CD8-positive, alpha-beta T cell (primary cell): ENCODE measurements at regions of chr19 and their contacts with region 1.

Region 1: DNA sequence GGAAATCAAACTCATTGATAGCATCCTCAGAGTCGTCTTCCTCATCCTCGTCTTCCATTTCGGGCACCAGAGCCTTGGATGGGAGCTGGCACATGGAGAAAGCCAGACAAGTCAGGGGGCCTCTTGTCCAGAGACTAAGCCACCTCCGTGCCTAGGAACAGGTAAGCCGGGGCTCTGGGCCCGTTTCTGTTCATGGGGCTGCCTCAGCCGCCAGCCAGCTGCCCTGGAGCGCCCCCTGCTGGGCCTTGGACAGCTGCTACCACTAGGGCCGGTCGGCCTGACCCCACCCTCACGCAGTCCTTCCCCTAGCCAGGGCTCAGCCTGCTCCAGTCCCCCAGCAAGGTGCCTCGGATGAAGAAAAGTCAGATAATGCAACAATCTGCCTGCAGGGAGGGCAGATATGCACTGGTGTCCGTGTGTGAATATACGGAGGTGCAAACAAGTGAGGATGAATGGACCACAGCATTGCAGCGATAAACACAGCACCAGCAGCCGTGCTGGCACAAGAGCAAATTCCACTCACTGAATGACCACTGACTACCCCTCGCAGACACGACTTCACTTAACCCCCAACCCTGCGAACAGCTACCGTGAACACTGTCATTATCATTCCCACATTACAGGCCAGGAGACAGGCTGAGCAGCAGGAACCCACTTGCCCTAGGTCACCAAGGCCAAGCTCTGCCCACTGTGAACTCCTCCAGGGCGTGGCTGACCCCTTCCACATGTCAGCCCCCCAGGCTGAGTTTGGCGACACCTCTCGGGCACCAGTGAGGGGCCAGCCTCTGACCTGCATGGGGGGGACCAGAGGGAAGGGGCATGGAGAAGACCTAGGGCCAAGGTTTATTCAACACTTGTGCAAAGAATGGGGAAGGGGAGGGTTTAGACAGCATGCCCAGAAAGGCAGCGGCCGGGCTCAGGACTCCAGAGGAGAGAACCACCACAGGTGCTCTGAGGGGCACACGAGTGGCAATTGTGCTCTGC is 12.1 kb upstream of the PRKD2 start:
- DNase-seq: peak; percentile 64 to 93 (median 84)
- ATAC-seq: peak; percentile 90
- H3K4me3 ChIP-seq: no peak overlapping the region
- H3K4me3 Mint-ChIP-seq: no peak overlapping the region
- H3K27ac ChIP-seq: no peak overlapping the region
- H3K27ac Mint-ChIP-seq: peak overlapping the region; percentile 32
- H3K4me1 ChIP-seq: peaks cover 13% of the 10 kb centered on the region
- H3K4me1 Mint-ChIP-seq: peaks cover 10% of the 10 kb centered on the region
- H3K27me3 ChIP-seq: no peaks in the 10 kb centered on the region
- H3K27me3 Mint-ChIP-seq: no peaks in the 10 kb centered on the region
- CTCF ChIP-seq: peak; percentile 90

Region 2: DNA sequence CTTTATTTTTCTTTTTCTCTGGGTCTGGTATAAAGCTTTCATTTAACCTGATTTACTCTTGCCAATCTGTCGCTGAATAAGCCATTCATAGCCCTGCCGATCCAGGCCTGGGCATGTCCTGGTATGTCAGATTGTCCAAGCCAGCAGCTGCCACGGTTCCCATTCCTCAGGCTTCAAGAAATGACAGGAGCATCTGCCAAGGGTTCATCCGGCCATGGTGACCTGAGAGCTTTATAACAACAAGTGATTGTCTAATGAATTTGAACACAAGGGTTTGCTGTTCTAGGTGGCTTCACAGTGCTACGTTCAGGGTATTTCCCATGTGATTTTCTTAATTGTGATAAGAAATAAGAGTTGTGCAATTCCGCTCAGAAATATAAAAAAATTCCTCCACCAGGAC is 277.6 kb before region 1 on chr19:
- CTCF ChIA-PET with region 1: no interaction called
- POLR2A ChIA-PET with region 1: no interaction called
- intact Hi-C with region 1: no loop called
- DNase-seq: no peak
- ATAC-seq: no peak
- H3K4me3 ChIP-seq: no peak overlapping the region
- H3K4me3 Mint-ChIP-seq: no peak overlapping the region
- H3K27ac ChIP-seq: no peak overlapping the region
- H3K27ac Mint-ChIP-seq: no peak overlapping the region
- H3K4me1 ChIP-seq: no peaks in the 10 kb centered on the region
- H3K4me1 Mint-ChIP-seq: no peaks in the 10 kb centered on the region
- H3K27me3 ChIP-seq: peaks cover 0 to 6% of the 10 kb centered on the region in 2 experiments
- H3K27me3 Mint-ChIP-seq: peaks cover 19% of the 10 kb centered on the region
- CTCF ChIP-seq: no peak

Region 3: DNA sequence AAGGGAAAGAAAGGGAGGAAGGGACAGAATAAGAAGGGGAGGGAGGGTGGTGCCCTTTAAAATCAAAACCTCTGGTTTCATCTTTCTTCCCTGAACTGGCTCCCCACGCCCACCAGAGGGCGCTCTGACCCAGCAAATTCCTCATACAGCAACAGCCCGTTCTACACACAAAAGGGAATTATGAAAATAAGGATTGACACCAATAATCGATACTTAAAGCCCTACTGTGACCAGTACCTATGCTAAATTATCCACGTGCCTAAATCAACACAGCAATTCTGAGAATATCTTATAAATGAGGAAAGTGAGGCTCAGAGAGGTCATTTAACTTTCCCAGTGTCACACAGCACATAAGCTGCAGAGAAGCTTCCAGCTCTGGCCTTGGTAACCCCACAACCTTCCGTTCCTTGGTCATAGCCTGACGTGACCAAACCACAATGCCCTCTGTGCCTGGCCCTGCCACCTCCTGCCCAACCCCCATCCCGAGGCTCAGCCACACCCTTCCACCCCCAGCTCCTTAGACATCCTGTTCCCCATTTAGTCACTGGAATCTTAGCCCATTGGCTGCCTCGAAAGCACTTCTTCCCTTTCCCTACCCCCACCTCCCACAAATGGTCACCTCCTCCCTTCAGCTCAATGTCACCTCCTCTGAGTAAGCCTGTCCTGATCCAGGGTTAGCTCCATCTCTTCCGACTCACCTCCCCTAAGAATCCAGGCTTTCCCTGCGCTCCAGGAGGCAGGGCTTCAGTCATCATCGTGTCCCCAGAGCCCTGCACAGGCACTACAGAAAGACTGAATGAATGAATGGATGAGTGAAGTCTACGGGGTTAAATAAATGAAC is 199.1 kb before region 1 on chr19:
- CTCF ChIA-PET with region 1: interaction called, 4 read pairs
- POLR2A ChIA-PET with region 1: no interaction called
- intact Hi-C with region 1: loop called in 1 of 2 experiments (anchors 1 kb)
- DNase-seq: peak; percentile 57 to 88 (median 74)
- ATAC-seq: peak; percentile 75
- H3K4me3 ChIP-seq: no peak overlapping the region
- H3K4me3 Mint-ChIP-seq: no peak overlapping the region
- H3K27ac ChIP-seq: no peak overlapping the region
- H3K27ac Mint-ChIP-seq: no peak overlapping the region
- H3K4me1 ChIP-seq: peaks cover 4% of the 10 kb centered on the region
- H3K4me1 Mint-ChIP-seq: peaks cover 13% of the 10 kb centered on the region
- H3K27me3 ChIP-seq: peaks cover 0 to 2% of the 10 kb centered on the region in 2 experiments
- H3K27me3 Mint-ChIP-seq: no peaks in the 10 kb centered on the region
- CTCF ChIP-seq: peak; percentile 99

Region 4: GRCh38 chr19:46564701-46565100 is 164.3 kb before region 1 on chr19:
- CTCF ChIA-PET with region 1: no interaction called
- POLR2A ChIA-PET with region 1: no interaction called
- intact Hi-C with region 1: no loop called
- DNase-seq: no peak
- ATAC-seq: no peak
- H3K4me3 ChIP-seq: no peak overlapping the region
- H3K4me3 Mint-ChIP-seq: no peak overlapping the region
- H3K27ac ChIP-seq: no peak overlapping the region
- H3K27ac Mint-ChIP-seq: no peak overlapping the region
- H3K4me1 ChIP-seq: no peaks in the 10 kb centered on the region
- H3K4me1 Mint-ChIP-seq: peaks cover 2% of the 10 kb centered on the region
- H3K27me3 ChIP-seq: no peaks in the 10 kb centered on the region
- H3K27me3 Mint-ChIP-seq: peaks cover 7% of the 10 kb centered on the region
- CTCF ChIP-seq: no peak

Region 5: DNA sequence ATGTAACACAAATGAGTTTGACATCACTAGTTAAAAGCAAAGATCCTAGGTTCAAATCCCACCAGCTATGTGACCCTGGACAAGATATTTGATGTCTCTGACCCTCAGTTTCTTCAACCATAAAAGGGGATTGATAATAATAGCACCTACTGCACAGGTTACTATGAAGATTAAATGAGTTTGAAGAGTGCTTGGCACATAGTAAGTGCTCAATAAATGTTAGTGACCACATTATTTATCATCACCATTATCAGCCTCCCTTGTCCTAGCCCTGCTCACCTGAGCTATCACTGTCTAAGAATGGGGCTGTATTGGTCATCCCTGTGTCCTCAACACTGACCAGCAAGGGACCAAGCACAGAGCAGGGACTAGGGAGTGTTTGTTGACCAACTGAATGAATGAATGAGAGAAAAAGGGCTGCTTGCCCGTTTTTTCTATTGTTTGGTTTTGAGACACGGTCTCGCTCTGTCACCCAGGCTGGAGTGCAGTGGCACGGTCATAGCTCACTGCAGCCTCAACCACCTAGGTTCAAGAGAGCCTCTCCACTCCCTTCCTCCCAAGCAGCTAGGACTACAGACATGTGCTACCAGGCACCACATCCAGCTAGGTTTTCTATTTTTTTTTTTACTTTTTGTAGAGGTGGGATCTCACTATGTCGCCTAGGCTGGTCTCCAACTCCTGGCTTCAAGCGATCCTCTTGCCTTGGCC is 41.4 kb before region 1 on chr19:
- CTCF ChIA-PET with region 1: interaction called, 11 read pairs
- POLR2A ChIA-PET with region 1: no interaction called
- intact Hi-C with region 1: no loop called
- DNase-seq: no peak
- ATAC-seq: no peak
- H3K4me3 ChIP-seq: no peak overlapping the region
- H3K4me3 Mint-ChIP-seq: no peak overlapping the region
- H3K27ac ChIP-seq: no peak overlapping the region
- H3K27ac Mint-ChIP-seq: no peak overlapping the region
- H3K4me1 ChIP-seq: no peaks in the 10 kb centered on the region
- H3K4me1 Mint-ChIP-seq: peaks cover 4% of the 10 kb centered on the region
- H3K27me3 ChIP-seq: no peaks in the 10 kb centered on the region
- H3K27me3 Mint-ChIP-seq: no peaks in the 10 kb centered on the region
- CTCF ChIP-seq: no peak

Region 6: GRCh38 chr19:46699488-46699887 is 29.5 kb before region 1 on chr19:
- CTCF ChIA-PET with region 1: interaction called, 269 read pairs
- POLR2A ChIA-PET with region 1: interaction called, 7 read pairs
- intact Hi-C with region 1: loop called (anchors 1 kb)
- DNase-seq: no peak
- ATAC-seq: no peak
- H3K4me3 ChIP-seq: no peak overlapping the region
- H3K4me3 Mint-ChIP-seq: no peak overlapping the region
- H3K27ac ChIP-seq: no peak overlapping the region
- H3K27ac Mint-ChIP-seq: no peak overlapping the region
- H3K4me1 ChIP-seq: peaks cover 4% of the 10 kb centered on the region
- H3K4me1 Mint-ChIP-seq: peaks cover 7% of the 10 kb centered on the region
- H3K27me3 ChIP-seq: no peaks in the 10 kb centered on the region
- H3K27me3 Mint-ChIP-seq: no peaks in the 10 kb centered on the region
- CTCF ChIP-seq: no peak

Region 7: GRCh38 chr19:46717034-46717723 is 11.8 kb before region 1 on chr19 and contains the start of gene PRKD2:
- CTCF ChIA-PET with region 1: interaction called, 79 read pairs
- POLR2A ChIA-PET with region 1: interaction called, 28 read pairs
- intact Hi-C with region 1: loop called in 1 of 2 experiments (anchors 1 kb)
- DNase-seq: peak; percentile 60 to 91 (median 86)
- ATAC-seq: peak; percentile 51
- H3K4me3 ChIP-seq: peak within 1 kb of the TSS; percentile 71 to 73
- H3K4me3 Mint-ChIP-seq: peak within 1 kb of the TSS; percentile 92
- H3K27ac ChIP-seq: peak within 1 kb of the TSS; percentile 77 to 94
- H3K27ac Mint-ChIP-seq: peak within 1 kb of the TSS; percentile 99
- H3K4me1 ChIP-seq: peaks cover 37% of the 10 kb centered on the region
- H3K4me1 Mint-ChIP-seq: peaks cover 45% of the 10 kb centered on the region
- H3K27me3 ChIP-seq: no peaks in the 10 kb centered on the region
- H3K27me3 Mint-ChIP-seq: no peaks in the 10 kb centered on the region
- CTCF ChIP-seq: no peak
- total RNA-seq, gene PRKD2: 81.1 to 89.7 TPM

Region 8: DNA sequence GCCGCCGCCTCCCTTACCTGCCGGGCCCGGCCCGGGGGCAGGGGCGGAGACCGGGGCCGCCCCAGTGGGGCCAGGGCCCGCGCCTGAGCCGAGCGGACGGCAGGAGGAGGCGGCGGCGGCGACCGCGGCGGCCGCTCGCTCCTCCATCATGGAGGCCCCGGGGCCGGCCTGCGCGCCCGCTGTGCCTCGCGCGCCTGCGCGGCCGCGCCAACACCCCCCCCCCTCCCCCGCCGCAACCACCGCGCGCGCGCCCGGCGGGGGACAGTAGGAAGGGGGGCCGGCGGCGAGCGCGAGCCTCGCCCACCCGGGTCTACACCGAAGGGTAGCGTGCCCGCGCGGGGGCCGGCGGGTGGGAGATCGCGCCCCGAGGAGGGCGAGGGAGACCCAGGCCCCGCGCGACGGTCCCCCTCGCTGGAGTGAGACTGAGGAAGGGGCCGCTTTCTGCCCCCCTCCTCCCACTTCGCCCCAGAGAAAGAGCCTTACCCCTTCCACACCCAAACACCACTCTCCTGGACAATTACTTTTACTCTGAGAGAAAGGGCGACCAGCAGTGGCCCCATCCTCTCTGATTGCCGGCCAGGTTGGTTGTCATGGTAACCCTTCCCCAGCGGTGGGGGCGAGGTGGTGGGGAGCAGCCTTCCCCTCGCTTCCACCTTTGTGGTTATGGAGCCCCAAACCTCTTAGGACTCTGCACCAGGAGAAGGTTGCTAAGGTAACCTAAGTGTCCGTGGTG is 17.5 kb after region 1 on chr19 and contains the start of gene STRN4:
- CTCF ChIA-PET with region 1: interaction called, 19 read pairs
- POLR2A ChIA-PET with region 1: no interaction called
- intact Hi-C with region 1: no loop called
- DNase-seq: peak in 8 of 9 experiments; percentile 50 to 85 (median 64)
- ATAC-seq: peak; percentile 74
- H3K4me3 ChIP-seq: peak within 1 kb of the TSS; percentile 79 to 90
- H3K4me3 Mint-ChIP-seq: peak within 1 kb of the TSS; percentile 89
- H3K27ac ChIP-seq: peak within 1 kb of the TSS; percentile 46 to 61
- H3K27ac Mint-ChIP-seq: peak within 1 kb of the TSS; percentile 88
- H3K4me1 ChIP-seq: peaks cover 33% of the 10 kb centered on the region
- H3K4me1 Mint-ChIP-seq: peaks cover 51% of the 10 kb centered on the region
- H3K27me3 ChIP-seq: no peaks in the 10 kb centered on the region
- H3K27me3 Mint-ChIP-seq: no peaks in the 10 kb centered on the region
- CTCF ChIP-seq: no peak
- total RNA-seq, gene STRN4: 120 to 126 TPM